ENCODE measurements at regions of chr1 and their contacts with region 1.

Region 1: DNA sequence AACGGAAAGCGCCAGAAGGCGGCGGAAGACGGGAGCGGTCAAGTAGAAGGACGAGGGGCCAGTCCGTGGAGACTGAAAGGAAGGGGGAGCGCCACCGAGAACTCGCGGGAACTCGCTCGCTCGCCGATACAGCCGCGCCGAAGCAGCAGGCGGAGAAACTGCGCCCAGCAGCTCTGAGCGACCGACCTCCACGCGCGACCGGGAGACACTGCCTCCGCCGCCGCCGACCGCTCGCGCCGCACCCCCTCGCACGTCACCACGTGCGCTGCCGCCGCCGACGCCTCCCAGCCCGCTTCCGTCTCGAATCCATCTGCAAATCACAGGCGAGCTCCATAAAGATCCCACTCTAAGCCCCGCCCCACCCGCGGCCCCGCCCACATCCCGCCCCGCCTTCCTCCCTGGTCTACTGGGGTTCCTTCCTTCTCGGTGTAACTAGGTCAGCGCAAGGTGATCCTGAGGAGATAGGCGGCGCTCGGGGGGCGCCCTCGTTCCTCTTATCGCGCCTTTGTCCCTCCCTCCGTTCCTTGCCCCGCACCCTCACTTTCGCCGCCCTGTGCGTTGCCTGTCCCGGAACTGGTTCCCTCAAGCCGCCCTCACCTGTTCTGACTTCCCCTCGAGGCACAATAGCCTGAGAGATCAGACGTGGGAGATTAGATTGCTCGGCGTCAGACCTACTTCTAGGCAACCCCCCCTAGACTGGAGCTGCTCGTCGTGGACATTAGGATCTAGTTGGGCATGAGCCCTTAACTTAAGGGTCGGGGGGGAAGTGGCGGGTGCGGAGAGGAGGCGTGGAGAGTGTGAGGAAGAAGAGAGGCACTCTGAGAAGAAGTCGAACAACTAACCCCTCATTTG is at the start of gene IVNS1ABP:
- DNase-seq: peak; percentile 98
- H3K4me3 Mint-ChIP-seq: peak within 1 kb of the TSS; percentile 95
- H3K27ac Mint-ChIP-seq: peak within 1 kb of the TSS; percentile 95
- H3K4me1 Mint-ChIP-seq: peaks cover 39% of the 10 kb centered on the region
- H3K27me3 Mint-ChIP-seq: no peaks in the 10 kb centered on the region
- total RNA-seq, gene IVNS1ABP: 186 and 187 TPM in 2 replicates

Region 2: GRCh38 chr1:184892116-184892515 is 425.1 kb before region 1 on chr1:
- intact Hi-C with region 1: loop called (anchors 5 kb)
- DNase-seq: peak; percentile 58
- H3K4me3 Mint-ChIP-seq: no peak overlapping the region
- H3K27ac Mint-ChIP-seq: peak overlapping the region; percentile 61
- H3K4me1 Mint-ChIP-seq: peaks cover 29% of the 10 kb centered on the region
- H3K27me3 Mint-ChIP-seq: no peaks in the 10 kb centered on the region

Region 3: GRCh38 chr1:185044981-185045813 is 272.1 kb before region 1 on chr1 and contains the start of gene RNF2:
- intact Hi-C with region 1: loop called (anchors 1 kb)
- DNase-seq: peak; percentile 91
- H3K4me3 Mint-ChIP-seq: peak within 1 kb of the TSS; percentile 93
- H3K27ac Mint-ChIP-seq: peak within 1 kb of the TSS; percentile 91
- H3K4me1 Mint-ChIP-seq: peaks cover 26% of the 10 kb centered on the region
- H3K27me3 Mint-ChIP-seq: peaks cover 18% of the 10 kb centered on the region
- total RNA-seq, gene RNF2: 17.8 and 21.1 TPM in 2 replicates

Region 4: GRCh38 chr1:185281245-185281644 is 36.0 kb before region 1 on chr1:
- intact Hi-C with region 1: no loop called
- DNase-seq: peak; percentile 78
- H3K4me3 Mint-ChIP-seq: peak overlapping the region; percentile 25
- H3K27ac Mint-ChIP-seq: peak overlapping the region; percentile 78
- H3K4me1 Mint-ChIP-seq: peaks cover 29% of the 10 kb centered on the region
- H3K27me3 Mint-ChIP-seq: no peaks in the 10 kb centered on the region

Region 5: GRCh38 chr1:185338719-185339622 is 21.7 kb after region 1 on chr1:
- intact Hi-C with region 1: loop called (anchors 1 kb)
- DNase-seq: peak; percentile 90
- H3K4me3 Mint-ChIP-seq: peak overlapping the region; percentile 57
- H3K27ac Mint-ChIP-seq: peak overlapping the region; percentile 70
- H3K4me1 Mint-ChIP-seq: peaks cover 40% of the 10 kb centered on the region
- H3K27me3 Mint-ChIP-seq: peaks cover 2% of the 10 kb centered on the region

Region 6: DNA sequence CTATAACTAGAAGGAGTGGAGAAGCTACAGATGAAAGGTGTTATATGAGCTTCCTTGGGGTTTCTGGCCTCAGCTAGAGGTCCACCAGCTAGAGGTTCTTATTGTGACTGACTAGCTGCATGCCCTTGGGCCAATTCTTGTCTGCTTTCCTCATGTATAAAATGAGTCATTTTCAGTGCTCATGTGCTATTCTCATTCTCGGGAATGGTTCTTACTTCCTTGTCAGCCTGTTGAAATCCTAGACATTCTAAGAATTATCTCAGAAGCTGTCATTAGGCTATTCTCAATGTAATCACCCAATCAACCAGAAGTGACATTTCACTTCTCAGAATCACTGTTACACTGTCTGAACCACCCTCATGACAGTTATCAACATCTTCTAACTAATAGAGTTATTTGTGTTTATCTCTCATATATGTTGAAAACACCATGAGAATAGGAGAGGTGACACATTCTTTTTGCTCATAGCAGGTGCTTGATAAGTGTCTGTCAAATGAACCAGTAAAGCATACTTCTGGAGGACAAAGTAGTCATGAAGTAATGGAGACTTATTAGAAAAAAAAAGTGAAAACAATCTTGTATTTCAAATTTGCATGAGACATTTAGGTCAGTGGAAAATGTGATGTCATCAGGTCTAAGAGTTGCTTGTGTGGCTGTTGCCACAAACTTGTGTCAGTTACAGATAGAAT is 122.6 kb after region 1 on chr1:
- intact Hi-C with region 1: loop called (anchors 1 kb)
- DNase-seq: peak; percentile 86
- H3K4me3 Mint-ChIP-seq: no peak overlapping the region
- H3K27ac Mint-ChIP-seq: no peak overlapping the region
- H3K4me1 Mint-ChIP-seq: peaks cover 28% of the 10 kb centered on the region
- H3K27me3 Mint-ChIP-seq: no peaks in the 10 kb centered on the region

Region 7: DNA sequence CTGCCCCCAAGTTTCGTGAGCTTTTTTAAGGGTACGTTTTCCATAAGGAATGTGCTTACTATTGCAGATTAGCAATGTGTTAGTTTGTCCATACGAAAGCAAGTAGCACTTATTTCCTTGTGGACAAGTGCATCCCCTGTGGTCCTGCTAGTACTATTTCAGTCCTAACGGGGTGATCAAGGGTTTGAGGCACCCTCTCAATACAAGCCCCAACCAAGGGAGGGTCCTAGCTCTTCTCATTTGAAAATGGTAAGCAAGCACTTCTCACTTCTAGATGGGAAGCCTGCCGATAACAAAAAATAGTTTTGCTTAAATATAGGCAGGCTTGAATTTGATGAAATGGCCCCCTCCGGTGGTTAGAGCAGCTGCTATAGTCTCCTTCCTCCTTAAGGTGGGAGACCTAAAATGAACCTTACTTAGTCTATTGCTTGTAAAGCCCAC is 352.9 kb after region 1 on chr1:
- intact Hi-C with region 1: loop called (anchors 1 kb)
- DNase-seq: peak; percentile 84
- H3K4me3 Mint-ChIP-seq: no peak overlapping the region
- H3K27ac Mint-ChIP-seq: no peak overlapping the region
- H3K4me1 Mint-ChIP-seq: peaks cover 24% of the 10 kb centered on the region
- H3K27me3 Mint-ChIP-seq: no peaks in the 10 kb centered on the region